GM23248 (cell line): ENCODE measurements at regions of chr12 and their contacts with region 1.

Region 1: GRCh38 chr12:84842406-84843013 is 70.1 kb downstream of the SLC6A15 start:
- DNase-seq: peak; percentile 74
- H3K4me3 ChIP-seq: no peak overlapping the region
- H3K27ac ChIP-seq: no peak overlapping the region
- H3K4me1 ChIP-seq: peaks cover 8% of the 10 kb centered on the region; the same call in 1 of the 2 replicates
- H3K27me3 ChIP-seq: no peaks in the 10 kb centered on the region

Region 2: DNA sequence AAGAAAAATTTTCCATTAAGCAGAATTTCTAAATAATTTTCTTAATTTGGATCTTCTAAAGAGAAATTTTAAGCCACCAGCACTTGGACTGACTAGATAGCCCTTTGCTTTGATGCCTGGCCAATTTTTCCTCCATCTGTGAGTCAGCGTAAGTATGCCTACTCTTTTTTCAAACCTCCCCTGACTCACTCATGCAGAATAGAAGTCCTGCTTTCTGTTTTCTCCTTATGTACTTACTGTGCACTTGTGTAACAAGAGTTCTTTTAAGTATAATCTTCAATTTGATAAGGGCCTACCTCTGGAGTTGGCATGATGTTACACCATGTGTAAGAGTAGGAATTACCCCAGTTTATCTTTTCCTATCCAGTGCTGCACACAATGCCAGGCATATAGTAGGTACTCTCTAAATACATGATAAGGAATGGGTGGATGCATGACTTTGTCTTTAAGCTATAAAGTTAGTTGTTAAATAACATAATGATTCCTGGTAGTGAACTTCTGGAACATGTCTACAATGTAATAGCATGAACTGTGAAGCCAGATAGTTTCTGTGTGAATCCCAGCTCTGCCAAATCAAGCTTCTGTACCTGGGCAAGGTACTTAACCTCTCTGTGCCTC is 1826.2 kb before region 1 on chr12:
- in situ Hi-C with region 1: loop called (anchors 25 kb)
- DNase-seq: peak; percentile 96
- H3K4me3 ChIP-seq: peak overlapping the region; percentile 71
- H3K27ac ChIP-seq: peak overlapping the region; percentile 12; the same call in 1 of the 2 replicates
- H3K4me1 ChIP-seq: peaks cover 6% of the 10 kb centered on the region; the same call in 1 of the 2 replicates
- H3K27me3 ChIP-seq: no peaks in the 10 kb centered on the region

Region 3: GRCh38 chr12:83823431-83823963 is 1019.0 kb before region 1 on chr12:
- in situ Hi-C with region 1: loop called (anchors 25 kb)
- DNase-seq: peak; percentile 2
- H3K4me3 ChIP-seq: no peak overlapping the region
- H3K27ac ChIP-seq: no peak overlapping the region
- H3K4me1 ChIP-seq: peaks cover 8% of the 10 kb centered on the region; the same call in 1 of the 2 replicates
- H3K27me3 ChIP-seq: no peaks in the 10 kb centered on the region

Region 4: GRCh38 chr12:84131076-84131475 is 711.4 kb before region 1 on chr12:
- in situ Hi-C with region 1: no loop called
- DNase-seq: peak; percentile 86
- H3K4me3 ChIP-seq: no peak overlapping the region
- H3K27ac ChIP-seq: peak overlapping the region; percentile 28; the same call in 1 of the 2 replicates
- H3K4me1 ChIP-seq: peaks cover 28% of the 10 kb centered on the region
- H3K27me3 ChIP-seq: no peaks in the 10 kb centered on the region

Region 5: GRCh38 chr12:84408936-84409335 is 433.6 kb before region 1 on chr12:
- in situ Hi-C with region 1: loop called (anchors 25 kb)
- DNase-seq: no peak
- H3K4me3 ChIP-seq: no peak overlapping the region
- H3K27ac ChIP-seq: no peak overlapping the region
- H3K4me1 ChIP-seq: peaks cover 5% of the 10 kb centered on the region; the same call in 1 of the 2 replicates
- H3K27me3 ChIP-seq: no peaks in the 10 kb centered on the region

Region 6: GRCh38 chr12:84502907-84503787 is 339.4 kb before region 1 on chr12:
- in situ Hi-C with region 1: loop called (anchors 10 kb)
- DNase-seq: peak; percentile 81
- H3K4me3 ChIP-seq: no peak overlapping the region
- H3K27ac ChIP-seq: no peak overlapping the region
- H3K4me1 ChIP-seq: no peaks in the 10 kb centered on the region
- H3K27me3 ChIP-seq: no peaks in the 10 kb centered on the region

Region 7: GRCh38 chr12:84619113-84619512 is 223.4 kb before region 1 on chr12:
- in situ Hi-C with region 1: loop called (anchors 25 kb)
- DNase-seq: peak; percentile 34
- H3K4me3 ChIP-seq: no peak overlapping the region
- H3K27ac ChIP-seq: no peak overlapping the region
- H3K4me1 ChIP-seq: no peaks in the 10 kb centered on the region
- H3K27me3 ChIP-seq: no peaks in the 10 kb centered on the region

Region 8: GRCh38 chr12:84689638-84690037 is 152.9 kb before region 1 on chr12:
- in situ Hi-C with region 1: no loop called
- DNase-seq: no peak
- H3K4me3 ChIP-seq: no peak overlapping the region
- H3K27ac ChIP-seq: no peak overlapping the region
- H3K4me1 ChIP-seq: no peaks in the 10 kb centered on the region
- H3K27me3 ChIP-seq: no peaks in the 10 kb centered on the region